Activated CD4-positive, alpha-beta memory T cell treated with anti-CD3 and anti-CD28 coated beads for 36 hours (primary cell): ENCODE measurements at regions of chr5 and their contacts with region 1.

Region 1: DNA sequence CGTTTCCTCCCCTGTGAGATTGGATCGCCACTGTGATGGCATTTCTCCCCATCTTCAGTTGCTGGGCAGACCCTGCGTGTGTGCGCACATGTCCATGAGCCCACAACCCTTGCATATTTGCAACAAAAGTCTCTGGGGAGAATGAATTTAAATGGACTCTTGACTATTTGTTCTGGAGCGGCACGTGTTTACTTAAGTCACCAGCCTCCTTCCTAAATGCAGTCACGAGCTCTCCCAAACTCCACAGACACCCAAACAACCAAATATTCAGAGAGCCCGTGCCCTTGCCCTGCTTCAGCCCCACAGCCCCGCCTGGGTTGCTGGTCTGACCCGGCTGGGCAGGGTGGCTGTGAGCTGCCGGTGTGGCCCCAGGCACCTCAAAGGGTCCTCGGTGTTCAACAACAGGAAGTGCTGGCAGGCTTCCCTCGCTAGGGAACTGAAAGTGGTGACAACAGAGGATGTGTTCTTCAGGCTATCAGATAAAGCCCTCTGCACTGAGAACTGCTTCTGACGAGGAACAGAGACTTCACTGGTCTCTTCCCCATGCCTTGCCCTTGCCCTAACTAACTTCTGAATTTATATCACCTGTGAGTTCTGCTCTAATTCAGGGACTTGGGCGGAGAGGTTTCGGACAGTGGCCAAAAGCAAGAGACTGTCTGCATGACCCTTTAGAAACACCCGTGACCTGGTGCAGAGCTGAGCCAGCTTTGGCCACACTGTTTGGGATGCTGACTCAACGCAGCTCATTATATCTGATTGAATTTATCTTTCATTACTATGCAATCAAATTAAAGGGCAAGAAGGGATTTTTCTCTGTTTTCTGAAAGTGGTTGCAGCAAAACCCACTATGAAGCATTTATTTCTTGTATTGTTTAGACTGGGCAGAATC is 19.2 kb upstream of the CD180 start:
- DNase-seq: peak; percentile 81
- H3K4me3 Mint-ChIP-seq: peak overlapping the region; percentile 62
- H3K27ac Mint-ChIP-seq: peak overlapping the region; percentile 86
- H3K4me1 Mint-ChIP-seq: peaks cover 54% of the 10 kb centered on the region
- H3K27me3 Mint-ChIP-seq: no peaks in the 10 kb centered on the region

Region 2: GRCh38 chr5:67032921-67033664 is 182.7 kb before region 1 on chr5:
- CTCF ChIA-PET with region 1: no interaction called
- POLR2A ChIA-PET with region 1: no interaction called
- intact Hi-C with region 1: no loop called
- DNase-seq: no peak
- H3K4me3 Mint-ChIP-seq: no peak overlapping the region
- H3K27ac Mint-ChIP-seq: no peak overlapping the region
- H3K4me1 Mint-ChIP-seq: peaks cover 67% of the 10 kb centered on the region
- H3K27me3 Mint-ChIP-seq: no peaks in the 10 kb centered on the region

Region 3: DNA sequence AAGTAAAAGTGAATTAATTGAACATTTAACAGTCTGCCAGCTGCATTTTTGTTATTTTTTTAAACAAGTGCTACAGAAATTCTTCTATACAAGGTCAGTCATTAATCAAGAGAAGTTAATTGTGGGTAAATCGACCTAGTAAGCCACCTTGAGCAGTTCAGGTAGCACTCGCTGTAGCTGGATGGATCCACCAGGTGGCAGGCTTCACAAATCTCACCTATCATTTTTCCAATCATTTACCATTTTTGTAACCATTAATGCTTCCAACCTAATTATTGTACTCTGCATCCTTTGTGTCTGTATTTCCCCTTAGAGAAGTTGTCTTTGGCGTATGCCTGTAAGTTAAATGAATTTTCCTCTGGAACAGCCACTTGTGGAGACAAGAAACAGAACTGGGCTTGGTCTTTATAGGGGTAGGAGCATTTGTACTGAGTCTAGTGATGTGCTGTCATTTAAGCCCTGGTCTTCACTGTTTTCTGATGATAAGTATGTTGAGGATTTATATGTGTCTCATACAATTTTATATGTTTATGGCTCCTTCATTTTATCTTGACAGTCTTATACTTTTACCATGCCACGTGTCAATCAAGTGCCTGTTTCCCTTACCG is 58.7 kb before region 1 on chr5:
- CTCF ChIA-PET with region 1: interaction called, 363 read pairs
- POLR2A ChIA-PET with region 1: no interaction called
- intact Hi-C with region 1: no loop called
- DNase-seq: peak; percentile 65
- H3K4me3 Mint-ChIP-seq: no peak overlapping the region
- H3K27ac Mint-ChIP-seq: peak overlapping the region; percentile 55
- H3K4me1 Mint-ChIP-seq: peaks cover 42% of the 10 kb centered on the region
- H3K27me3 Mint-ChIP-seq: no peaks in the 10 kb centered on the region

Region 4: DNA sequence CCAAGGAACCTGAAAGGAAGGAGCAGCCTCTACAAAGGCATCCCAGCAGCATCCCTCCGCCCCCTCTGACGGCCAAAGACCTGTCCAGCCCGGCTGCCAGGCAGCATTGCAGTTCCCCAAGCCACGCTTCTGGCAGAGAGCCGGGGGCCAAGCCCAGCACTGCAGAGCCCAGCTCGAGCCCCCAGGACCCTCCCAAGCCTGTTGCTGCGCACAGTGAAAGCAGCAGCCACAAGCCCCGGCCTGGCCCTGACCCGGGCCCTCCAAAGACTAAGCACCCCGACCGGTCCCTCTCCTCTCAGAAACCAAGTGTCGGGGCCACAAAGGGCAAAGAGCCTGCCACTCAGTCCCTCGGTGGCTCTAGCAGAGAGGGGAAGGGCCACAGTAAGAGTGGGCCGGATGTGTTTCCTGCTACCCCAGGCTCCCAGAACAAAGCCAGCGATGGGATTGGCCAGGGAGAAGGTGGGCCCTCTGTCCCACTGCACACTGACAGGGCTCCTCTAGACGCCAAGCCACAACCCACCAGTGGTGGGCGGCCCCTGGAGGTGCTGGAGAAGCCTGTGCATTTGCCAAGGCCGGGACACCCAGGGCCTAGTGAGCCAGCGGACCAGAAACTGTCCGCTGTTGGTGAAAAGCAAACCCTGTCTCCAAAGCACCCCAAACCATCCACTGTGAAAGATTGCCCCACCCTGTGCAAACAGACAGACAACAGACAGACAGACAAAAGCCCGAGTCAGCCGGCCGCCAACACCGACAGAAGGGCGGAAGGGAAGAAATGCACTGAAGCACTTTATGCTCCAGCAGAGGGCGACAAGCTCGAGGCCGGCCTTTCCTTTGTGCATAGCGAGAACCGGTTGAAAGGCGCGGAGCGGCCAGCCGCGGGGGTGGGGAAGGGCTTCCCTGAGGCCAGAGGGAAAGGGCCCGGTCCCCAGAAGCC is 50.0 kb before region 1 on chr5:
- CTCF ChIA-PET with region 1: interaction called, 363 read pairs
- POLR2A ChIA-PET with region 1: no interaction called
- intact Hi-C with region 1: no loop called
- DNase-seq: peak; percentile 89
- H3K4me3 Mint-ChIP-seq: peak overlapping the region; percentile 91
- H3K27ac Mint-ChIP-seq: peak overlapping the region; percentile 98
- H3K4me1 Mint-ChIP-seq: peaks cover 70% of the 10 kb centered on the region
- H3K27me3 Mint-ChIP-seq: no peaks in the 10 kb centered on the region